Tibial artery (tissue), 4 donors: ENCODE measurements at regions of chr9 and their contacts with region 1.

Region 1: GRCh38 chr9:129900263-129901027 is 65.2 kb downstream of the USP20 start:
- DNase-seq: no peak
- H3K4me3 ChIP-seq: no peak overlapping the region
- H3K27ac ChIP-seq: no peak overlapping the region
- H3K4me1 ChIP-seq: no peaks in the 10 kb centered on the region
- H3K27me3 ChIP-seq: no peaks in the 10 kb centered on the region
- CTCF ChIP-seq: no peak

Region 2: GRCh38 chr9:129838707-129839259 is 61.7 kb before region 1 on chr9:
- intact Hi-C with region 1: no loop called
- DNase-seq: no peak
- H3K4me3 ChIP-seq: no peak overlapping the region
- H3K27ac ChIP-seq: peak overlapping the region in 1 of 2 donors; percentile 1
- H3K4me1 ChIP-seq: peaks cover 0 to 50% (median 35%) of the 10 kb centered on the region in 4 donors
- H3K27me3 ChIP-seq: no peaks in the 10 kb centered on the region
- CTCF ChIP-seq: no peak

Region 3: DNA sequence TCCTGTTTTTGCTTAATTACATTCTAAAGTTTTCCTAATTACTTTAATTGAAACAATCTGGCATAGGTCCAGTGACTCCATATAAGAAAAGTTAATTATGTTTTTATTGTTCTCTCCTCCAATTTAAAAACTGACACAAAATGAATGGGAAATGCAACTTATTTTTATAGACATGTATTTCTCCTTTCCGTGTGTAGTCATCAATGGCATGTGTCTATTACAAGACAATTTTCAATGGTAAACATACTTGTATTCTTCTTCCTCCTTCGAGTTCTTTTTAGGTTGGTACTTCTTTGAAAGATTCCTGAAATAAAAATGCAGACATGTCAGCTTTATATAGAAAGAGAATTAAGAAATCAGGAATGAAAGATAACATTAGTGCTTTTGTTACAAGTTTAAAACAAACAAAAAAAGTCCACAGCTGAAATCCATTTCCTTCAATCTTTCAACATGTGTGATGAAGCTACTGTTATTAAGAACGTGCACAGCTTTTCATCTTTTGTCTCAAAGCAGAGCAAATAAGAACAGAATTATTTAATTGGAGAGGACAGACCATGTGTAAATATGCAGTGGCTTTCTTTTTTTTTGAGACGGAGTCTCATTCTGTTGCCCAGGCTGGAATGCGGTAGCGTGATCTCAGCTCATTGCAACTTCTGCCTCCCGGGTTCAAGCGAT is 78.8 kb after region 1 on chr9:
- intact Hi-C with region 1: loop called (anchors 5 kb)
- DNase-seq: no peak
- H3K4me3 ChIP-seq: no peak overlapping the region
- H3K27ac ChIP-seq: no peak overlapping the region
- H3K4me1 ChIP-seq: peaks cover 0 to 11% (median 7%) of the 10 kb centered on the region in 4 donors
- H3K27me3 ChIP-seq: no peaks in the 10 kb centered on the region
- CTCF ChIP-seq: no peak